Posterior vena cava (tissue), 2 donors: ENCODE measurements at regions of chr19 and their contacts with region 1.

Region 1: DNA sequence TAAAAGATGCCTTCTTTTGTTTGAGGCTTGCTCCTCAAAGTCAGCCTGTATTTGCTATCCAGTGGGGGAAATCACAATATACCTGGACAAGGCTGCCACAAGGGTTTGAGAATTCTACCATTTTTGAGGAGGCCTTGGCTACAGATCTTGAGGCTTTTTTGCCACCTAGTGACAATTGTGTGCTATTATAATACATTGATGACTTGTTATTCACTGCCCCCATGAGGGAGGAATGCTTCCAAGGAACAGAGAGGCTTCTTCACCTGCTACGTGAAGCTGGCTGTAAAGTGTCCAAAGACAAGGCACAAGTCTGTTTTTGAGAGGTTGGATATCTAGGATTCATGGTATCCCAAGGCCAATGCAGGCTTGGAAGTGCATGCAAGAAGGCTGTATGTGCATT is 72.5 kb downstream of the ZNF708 start:
- DNase-seq: no peak

Region 2: DNA sequence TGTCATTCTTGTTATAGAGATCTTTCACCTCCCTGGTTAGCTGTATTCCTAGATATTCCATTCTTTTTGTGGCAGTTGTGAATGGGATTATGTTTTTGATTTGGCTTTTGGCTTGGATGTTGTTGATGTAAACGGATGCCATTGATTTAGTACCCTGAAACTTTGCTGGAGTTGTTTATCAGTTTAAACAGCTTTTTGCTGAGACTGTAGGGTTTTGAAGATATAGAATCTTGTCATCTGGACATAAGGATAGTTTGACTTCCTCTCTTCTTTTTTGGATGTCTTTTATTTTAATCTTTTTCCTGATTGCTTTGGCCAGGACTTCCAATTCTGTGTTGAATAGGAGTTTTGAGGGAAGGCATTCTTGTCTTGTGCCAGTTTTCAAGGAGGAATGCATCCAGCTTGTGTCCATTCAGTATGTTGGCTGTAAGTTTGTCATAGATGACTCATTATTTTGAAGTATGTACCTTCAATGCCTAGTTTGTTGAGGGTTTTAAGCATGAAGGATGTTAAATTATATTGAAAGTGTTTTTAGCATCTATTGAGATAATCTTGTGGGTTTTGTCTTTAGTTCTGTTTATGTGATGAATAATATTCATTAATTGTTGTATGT is 98.1 kb before region 1 on chr19:
- intact Hi-C with region 1: no loop called
- DNase-seq: no peak

Region 3: GRCh38 chr19:21269813-21270212 is 13.1 kb after region 1 on chr19:
- intact Hi-C with region 1: loop called in 1 of 2 experiments (anchors 1 kb)
- DNase-seq: no peak